HEK293 (cell line): ENCODE measurements at regions of chr2 and their contacts with region 1.

Region 1: DNA sequence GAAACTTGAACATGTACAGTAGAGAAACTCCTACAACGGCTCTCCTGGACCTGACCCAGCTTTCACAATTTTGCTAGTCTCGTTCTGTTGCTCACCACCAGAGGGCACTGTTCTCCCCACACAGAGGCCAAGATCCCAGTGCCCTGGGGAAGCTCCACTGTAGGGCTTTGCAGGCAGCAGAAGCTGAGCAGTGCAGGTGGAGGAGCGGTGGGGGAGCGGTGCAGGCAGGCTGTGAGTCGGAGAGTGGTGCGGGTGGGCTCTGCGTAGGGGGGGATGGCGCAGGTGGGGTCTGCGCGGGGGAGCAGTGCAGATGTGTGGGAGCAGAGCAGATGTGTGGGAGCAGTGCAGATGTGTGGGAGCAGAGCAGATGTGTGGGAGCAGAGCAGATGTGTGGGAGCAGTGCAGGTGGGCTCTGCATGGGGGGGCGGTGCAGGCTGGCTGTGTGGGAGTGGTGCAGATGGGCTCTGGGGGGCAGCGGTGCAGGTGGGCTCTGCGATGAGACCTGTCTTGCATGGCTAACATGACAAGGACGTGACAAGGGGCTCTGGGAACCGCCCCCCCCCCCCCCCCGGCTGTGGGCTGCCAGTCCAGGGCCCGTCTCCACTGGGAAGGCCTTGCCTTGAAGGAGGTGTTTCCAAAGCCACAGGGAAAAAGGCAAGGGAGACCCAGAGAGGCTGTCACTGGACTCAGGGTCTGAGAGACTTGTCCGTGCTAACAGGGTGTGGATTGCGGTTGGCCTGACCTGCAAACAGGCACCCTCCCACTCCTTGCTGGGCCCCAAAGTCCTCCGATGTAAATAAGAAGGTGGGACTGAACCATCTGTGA is 7.3 kb downstream of the CYS1 start:
- H3K4me3 ChIP-seq: no peak overlapping the region
- H3K27ac ChIP-seq: no peak overlapping the region
- H3K4me1 ChIP-seq: 0 out of 2 replicates have a peak, but pooled peaks cover 2% of the 10 kb centered on the region
- CTCF ChIP-seq: peak; percentile 77

Region 2: DNA sequence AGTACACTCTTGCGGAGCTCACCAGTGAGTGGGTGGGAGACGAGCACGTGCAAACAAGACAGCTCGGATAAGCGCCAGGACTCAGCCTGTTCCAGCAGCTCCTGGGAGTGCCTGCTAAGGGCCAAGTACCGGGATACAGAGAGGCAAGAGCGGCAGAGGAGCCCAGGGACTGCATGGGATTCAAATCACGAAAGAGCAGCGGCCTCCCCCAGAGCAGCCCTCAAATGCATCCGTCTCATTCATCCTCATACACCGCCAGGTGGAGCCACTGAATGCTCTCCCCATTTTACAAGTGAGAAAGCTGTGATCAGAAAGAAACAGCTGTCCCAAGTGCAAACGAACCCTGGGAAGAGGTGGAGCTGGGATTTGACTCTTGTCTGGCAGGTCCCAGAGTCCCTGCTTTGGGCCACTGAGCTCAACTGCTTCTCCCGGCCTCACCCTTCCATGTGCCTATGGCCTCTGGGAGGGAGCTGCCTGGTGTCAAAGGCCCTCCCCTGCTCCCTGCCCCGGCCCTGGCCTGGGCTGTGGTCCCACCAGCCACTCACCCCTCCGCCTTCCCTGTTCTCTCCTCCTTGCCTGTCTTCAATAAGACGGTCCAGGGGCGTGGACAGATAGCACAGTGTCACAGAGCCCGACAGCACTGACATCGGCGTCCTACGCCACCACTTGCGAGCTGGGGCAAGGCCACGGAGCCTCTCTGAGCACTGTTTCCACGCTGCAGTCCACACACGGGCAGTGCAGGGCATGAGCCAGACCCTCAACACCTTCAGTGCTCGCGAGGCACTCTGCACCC is 302.4 kb before region 1 on chr2:
- CTCF ChIA-PET with region 1: interaction called, 12 read pairs
- POLR2A ChIA-PET with region 1: no interaction called
- H3K4me3 ChIP-seq: no peak overlapping the region
- H3K27ac ChIP-seq: no peak overlapping the region
- H3K4me1 ChIP-seq: no peaks in the 10 kb centered on the region
- CTCF ChIP-seq: 0 out of 2 replicates have a peak, but pooled peaks have one; percentile 39

Region 3: GRCh38 chr2:9813312-9814133 is 259.3 kb before region 1 on chr2:
- CTCF ChIA-PET with region 1: interaction called, 16 read pairs
- POLR2A ChIA-PET with region 1: no interaction called
- H3K4me3 ChIP-seq: no peak overlapping the region
- H3K27ac ChIP-seq: no peak overlapping the region
- H3K4me1 ChIP-seq: no peaks in the 10 kb centered on the region
- CTCF ChIP-seq: peak; percentile 86

Region 4: GRCh38 chr2:9975805-9976447 is 96.9 kb before region 1 on chr2:
- CTCF ChIA-PET with region 1: no interaction called
- POLR2A ChIA-PET with region 1: no interaction called
- H3K4me3 ChIP-seq: no peak overlapping the region
- H3K27ac ChIP-seq: no peak overlapping the region
- H3K4me1 ChIP-seq: peaks cover 6% of the 10 kb centered on the region; the same call in 1 of the 2 replicates
- CTCF ChIP-seq: no peak

Region 5: GRCh38 chr2:10019174-10019573 is 53.7 kb before region 1 on chr2:
- CTCF ChIA-PET with region 1: no interaction called
- POLR2A ChIA-PET with region 1: no interaction called
- H3K4me3 ChIP-seq: no peak overlapping the region
- H3K27ac ChIP-seq: no peak overlapping the region
- H3K4me1 ChIP-seq: no peaks in the 10 kb centered on the region
- CTCF ChIP-seq: no peak

Region 6: GRCh38 chr2:10087360-10087759 is 14.5 kb after region 1 on chr2:
- CTCF ChIA-PET with region 1: interaction called, 124 read pairs
- POLR2A ChIA-PET with region 1: interaction called, 4 read pairs
- H3K4me3 ChIP-seq: no peak overlapping the region
- H3K27ac ChIP-seq: no peak overlapping the region
- H3K4me1 ChIP-seq: 0 out of 2 replicates have a peak, but pooled peaks cover 11% of the 10 kb centered on the region
- CTCF ChIP-seq: no peak

Region 7: GRCh38 chr2:10122386-10123280 is 49.8 kb after region 1 on chr2 and contains the start of gene RRM2:
- CTCF ChIA-PET with region 1: interaction called, 22 read pairs
- POLR2A ChIA-PET with region 1: interaction called, 5 read pairs
- H3K4me3 ChIP-seq: peak within 1 kb of the TSS; percentile 70
- H3K27ac ChIP-seq: peak within 1 kb of the TSS; percentile 97
- H3K4me1 ChIP-seq: peaks cover 5% of the 10 kb centered on the region; the same call in 1 of the 2 replicates
- CTCF ChIP-seq: peak; percentile 87

Region 8: DNA sequence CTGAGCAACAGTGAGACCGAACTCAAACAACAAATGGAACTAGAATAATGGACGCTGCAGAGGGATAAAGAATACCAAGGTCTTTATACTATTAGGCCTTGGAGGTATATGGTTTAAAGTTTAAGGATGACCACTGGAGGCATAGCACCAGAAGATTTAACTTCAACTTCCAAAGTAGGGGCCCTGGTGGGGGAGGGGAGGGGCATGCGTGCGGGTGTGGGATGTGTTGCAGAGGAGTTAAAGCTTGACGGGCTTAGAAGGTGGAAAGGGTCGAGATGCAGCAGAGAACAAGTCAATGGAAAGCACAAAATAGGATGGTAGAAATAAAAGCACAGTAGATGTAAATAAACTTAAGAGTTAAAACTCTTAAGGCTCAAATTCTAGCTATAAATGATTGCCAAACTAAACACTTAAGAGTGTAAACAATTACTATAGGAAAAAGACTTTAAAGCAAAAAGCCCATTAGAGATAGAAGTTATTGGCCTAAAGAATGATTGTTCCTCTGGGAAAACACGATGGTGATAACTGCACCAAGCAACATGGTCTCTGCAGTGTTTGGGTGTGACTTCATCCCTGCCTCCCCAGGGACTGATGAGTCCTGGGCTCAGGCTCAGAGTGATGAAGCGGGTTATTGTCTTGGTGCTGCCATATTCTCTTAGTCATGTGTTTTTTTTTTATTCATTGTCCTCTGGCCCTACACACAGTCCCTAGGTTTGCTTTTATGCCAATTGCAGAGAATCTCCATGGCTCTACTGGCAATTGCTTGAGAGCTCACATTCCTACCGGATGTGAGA is 62.6 kb after region 1 on chr2:
- CTCF ChIA-PET with region 1: interaction called, 13 read pairs
- POLR2A ChIA-PET with region 1: interaction called, 10 read pairs
- H3K4me3 ChIP-seq: no peak overlapping the region
- H3K27ac ChIP-seq: 0 out of 2 replicates have a peak overlapping the region, but pooled peaks have one; percentile 11
- H3K4me1 ChIP-seq: peaks cover 8% of the 10 kb centered on the region; the same call in 1 of the 2 replicates
- CTCF ChIP-seq: no peak

Region 9: GRCh38 chr2:10434886-10435819 is 362.3 kb after region 1 on chr2:
- CTCF ChIA-PET with region 1: interaction called, 81 read pairs
- POLR2A ChIA-PET with region 1: interaction called, 6 read pairs
- H3K4me3 ChIP-seq: no peak overlapping the region
- H3K27ac ChIP-seq: no peak overlapping the region
- H3K4me1 ChIP-seq: no peaks in the 10 kb centered on the region
- CTCF ChIP-seq: peak; percentile 92